Activated CD4-positive, alpha-beta memory T cell treated with anti-CD3 and anti-CD28 coated beads for 36 hours (primary cell): ENCODE measurements at regions of chr5 and their contacts with region 1.

Region 1: GRCh38 chr5:103224118-103224893 is 34.3 kb upstream of the MACIR start:
- DNase-seq: peak; percentile 34
- H3K4me3 Mint-ChIP-seq: no peak overlapping the region
- H3K27ac Mint-ChIP-seq: no peak overlapping the region
- H3K4me1 Mint-ChIP-seq: no peaks in the 10 kb centered on the region
- H3K27me3 Mint-ChIP-seq: peaks cover 23% of the 10 kb centered on the region

Region 2: DNA sequence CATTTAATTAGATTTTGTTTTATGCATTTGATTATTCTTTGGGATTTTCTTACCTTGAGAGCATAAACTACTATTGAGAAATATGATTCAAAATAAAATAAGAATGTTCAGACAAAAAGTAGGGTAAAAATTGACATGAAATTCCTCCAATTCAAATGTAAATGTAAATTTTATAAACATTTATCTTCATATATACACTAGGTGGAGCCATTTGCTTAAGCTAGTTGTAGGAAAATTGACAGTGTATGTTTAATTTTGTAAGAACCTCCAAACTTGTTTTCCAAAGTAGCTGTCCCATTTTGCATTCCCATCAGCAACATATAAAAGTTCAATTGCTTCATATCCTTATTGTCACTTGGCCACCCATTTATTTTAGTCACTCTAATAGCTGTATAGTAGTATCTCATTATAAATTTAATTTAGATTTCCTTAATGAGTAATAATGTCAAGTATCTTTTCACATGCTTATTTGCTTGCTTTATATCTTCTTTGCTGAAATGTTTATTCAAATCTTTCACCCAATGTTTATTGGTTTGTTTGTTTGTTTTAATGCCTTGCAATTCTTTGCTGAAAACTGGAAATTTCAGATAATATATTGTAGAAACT is 687.9 kb before region 1 on chr5:
- CTCF ChIA-PET with region 1: interaction called, 23 read pairs
- POLR2A ChIA-PET with region 1: no interaction called
- intact Hi-C with region 1: loop called (anchors 2 kb)
- DNase-seq: no peak
- H3K4me3 Mint-ChIP-seq: no peak overlapping the region
- H3K27ac Mint-ChIP-seq: no peak overlapping the region
- H3K4me1 Mint-ChIP-seq: no peaks in the 10 kb centered on the region
- H3K27me3 Mint-ChIP-seq: peaks cover 6% of the 10 kb centered on the region

Region 3: DNA sequence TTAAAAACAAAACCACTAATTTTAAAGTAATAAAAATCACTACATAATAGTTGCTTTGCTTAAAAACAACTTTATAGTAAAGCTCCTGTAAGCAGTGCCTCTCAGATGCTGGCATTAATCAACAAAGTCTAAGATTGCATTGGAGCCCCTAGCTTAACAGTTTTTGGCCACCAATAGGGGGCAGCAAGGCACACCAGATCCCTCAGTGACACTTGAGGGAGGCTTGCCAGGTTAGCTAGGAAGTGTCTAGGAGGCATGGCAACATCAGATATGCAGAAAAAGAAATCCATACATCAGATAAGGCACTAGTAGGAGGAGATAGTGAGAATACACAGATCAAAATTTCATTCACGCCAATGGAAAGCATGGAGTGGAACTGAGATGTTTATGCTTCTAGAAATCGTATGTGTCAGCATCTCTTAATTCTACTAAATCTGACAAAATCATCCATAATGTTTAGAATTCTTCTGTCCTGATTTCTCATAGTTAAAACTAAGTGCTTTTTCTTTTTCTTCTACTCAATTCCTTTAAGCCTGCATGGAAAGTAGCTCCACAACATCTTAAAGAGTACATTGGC is 542.8 kb before region 1 on chr5:
- CTCF ChIA-PET with region 1: interaction called, 12 read pairs
- POLR2A ChIA-PET with region 1: no interaction called
- intact Hi-C with region 1: loop called (anchors 2 kb)
- DNase-seq: peak; percentile 76
- H3K4me3 Mint-ChIP-seq: no peak overlapping the region
- H3K27ac Mint-ChIP-seq: no peak overlapping the region
- H3K4me1 Mint-ChIP-seq: no peaks in the 10 kb centered on the region
- H3K27me3 Mint-ChIP-seq: no peaks in the 10 kb centered on the region

Region 4: GRCh38 chr5:103211576-103212561 is 12.4 kb before region 1 on chr5:
- CTCF ChIA-PET with region 1: interaction called, 13 read pairs
- POLR2A ChIA-PET with region 1: no interaction called
- intact Hi-C with region 1: no loop called
- DNase-seq: no peak
- H3K4me3 Mint-ChIP-seq: no peak overlapping the region
- H3K27ac Mint-ChIP-seq: no peak overlapping the region
- H3K4me1 Mint-ChIP-seq: peaks cover 22% of the 10 kb centered on the region
- H3K27me3 Mint-ChIP-seq: no peaks in the 10 kb centered on the region

Region 5: GRCh38 chr5:103475629-103476240 is 251.4 kb after region 1 on chr5:
- CTCF ChIA-PET with region 1: interaction called, 16 read pairs
- POLR2A ChIA-PET with region 1: no interaction called
- intact Hi-C with region 1: loop called (anchors 2 kb)
- DNase-seq: no peak
- H3K4me3 Mint-ChIP-seq: no peak overlapping the region
- H3K27ac Mint-ChIP-seq: no peak overlapping the region
- H3K4me1 Mint-ChIP-seq: no peaks in the 10 kb centered on the region
- H3K27me3 Mint-ChIP-seq: peaks cover 11% of the 10 kb centered on the region